ENCODE measurements at regions of chrX and their contacts with region 1.

Region 1: DNA sequence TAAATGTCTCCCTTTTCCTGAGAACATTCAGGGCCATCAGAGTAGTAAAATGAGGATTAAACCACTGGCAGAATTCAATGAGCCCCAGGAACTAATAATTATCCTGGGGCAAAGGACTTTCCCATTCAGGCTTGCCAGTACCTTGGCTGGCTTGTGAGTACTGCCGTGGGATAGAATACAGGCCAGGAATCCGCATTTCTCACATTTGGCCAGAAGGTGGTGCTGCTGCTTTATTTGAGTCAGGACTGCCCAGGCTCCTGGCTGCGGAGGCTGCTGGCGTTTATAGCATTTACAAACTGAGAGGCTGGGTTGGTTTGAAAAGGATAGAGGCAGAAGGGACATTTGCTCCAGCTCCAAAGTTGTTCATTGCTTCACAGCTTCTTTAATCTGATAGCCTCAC is 91.4 kb downstream of the RTL9 start:
- DNase-seq: peak; percentile 72 to 76
- H3K4me3 ChIP-seq: no peak overlapping the region
- H3K27ac ChIP-seq: no peak overlapping the region
- H3K4me1 ChIP-seq: no peaks in the 10 kb centered on the region
- H3K27me3 ChIP-seq: no peaks in the 10 kb centered on the region
- CTCF ChIP-seq: peak; percentile 32 to 82 (median 58)
- POLR2A ChIP-seq: no peak

Region 2: DNA sequence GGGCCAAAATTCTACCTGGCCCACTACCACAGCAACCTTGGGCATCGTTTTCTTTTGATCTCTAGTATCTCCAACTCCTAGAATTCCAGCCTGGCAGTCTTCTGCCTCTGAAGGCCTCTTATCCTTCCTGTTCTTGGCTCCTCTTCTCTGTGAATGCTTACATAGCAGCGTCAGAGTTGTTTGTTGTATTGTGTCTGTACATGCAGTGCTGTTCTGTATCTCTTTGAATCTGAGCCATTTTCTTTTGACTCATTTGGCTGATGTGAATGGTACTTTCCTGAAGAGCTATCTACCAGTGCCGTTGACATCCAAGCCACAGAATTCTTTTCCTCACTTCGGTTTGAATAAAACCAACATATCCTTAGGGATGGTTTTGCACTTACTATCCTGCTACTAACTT is 367.9 kb before region 1 on chrX:
- intact Hi-C with region 1: no loop called
- DNase-seq: no peak
- H3K4me3 ChIP-seq: no peak overlapping the region
- H3K27ac ChIP-seq: peak overlapping the region in 1 of 3 donors; percentile 30
- H3K4me1 ChIP-seq: peaks cover 0 to 13% of the 10 kb centered on the region in 2 donors
- H3K27me3 ChIP-seq: no peaks in the 10 kb centered on the region
- CTCF ChIP-seq: no peak
- POLR2A ChIP-seq: no peak

Region 3: DNA sequence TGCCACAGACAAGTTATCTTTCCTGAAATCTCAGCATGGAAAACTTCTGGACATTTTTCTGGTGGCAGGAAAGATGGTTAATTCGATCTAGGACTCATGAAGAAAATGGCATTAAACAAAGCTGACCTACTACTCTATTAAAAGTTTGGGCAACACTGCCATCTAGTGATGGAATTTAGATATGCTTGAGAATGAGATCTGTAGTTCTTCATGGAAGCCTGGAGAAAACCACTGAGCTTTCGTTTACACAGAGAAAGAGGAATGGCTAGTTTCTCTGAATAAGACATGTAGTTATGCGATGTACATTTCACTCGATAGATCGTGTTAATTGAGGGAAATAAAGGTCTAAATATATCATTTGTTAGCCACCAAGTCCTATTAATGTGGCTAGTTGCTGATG is 397.3 kb after region 1 on chrX:
- intact Hi-C with region 1: loop called (anchors 5 kb)
- DNase-seq: no peak
- H3K4me3 ChIP-seq: no peak overlapping the region
- H3K27ac ChIP-seq: no peak overlapping the region
- H3K4me1 ChIP-seq: no peaks in the 10 kb centered on the region
- H3K27me3 ChIP-seq: peaks cover 3% of the 10 kb centered on the region
- CTCF ChIP-seq: peak; percentile 17 to 73 (median 48)
- POLR2A ChIP-seq: no peak

Measured in thyroid gland (tissue), 4 donors.